Heart right ventricle (tissue), 16 donors: ENCODE measurements at regions of chr10 and their contacts with region 1.

Region 1: DNA sequence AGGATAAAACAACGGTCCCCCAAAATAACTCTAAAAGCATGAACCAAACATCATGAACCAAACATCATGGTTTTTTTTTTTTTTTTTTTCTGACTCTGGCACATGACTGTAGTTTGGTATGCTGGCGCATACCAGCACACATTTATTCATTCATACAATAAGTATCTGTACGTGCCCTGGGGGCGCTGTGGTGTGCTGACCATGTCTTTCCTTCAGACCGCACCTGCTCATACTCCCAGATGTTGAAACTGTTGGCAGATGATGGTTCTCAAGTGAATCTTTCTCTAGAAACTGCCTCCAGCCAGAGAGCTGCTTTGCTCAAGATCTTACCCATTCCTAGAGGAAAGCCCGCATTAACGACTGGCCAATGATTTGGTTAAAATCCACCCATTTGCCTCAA is 114.7 kb upstream of the ANKRD30A start:
- DNase-seq: no peak
- ATAC-seq: no peak
- H3K4me3 ChIP-seq: no peak overlapping the region
- H3K27ac ChIP-seq: no peak overlapping the region
- H3K4me1 ChIP-seq: no peaks in the 10 kb centered on the region
- H3K27me3 ChIP-seq: peaks cover 0 to 5% (median 0%) of the 10 kb centered on the region in 7 donors
- CTCF ChIP-seq: no peak

Region 2: DNA sequence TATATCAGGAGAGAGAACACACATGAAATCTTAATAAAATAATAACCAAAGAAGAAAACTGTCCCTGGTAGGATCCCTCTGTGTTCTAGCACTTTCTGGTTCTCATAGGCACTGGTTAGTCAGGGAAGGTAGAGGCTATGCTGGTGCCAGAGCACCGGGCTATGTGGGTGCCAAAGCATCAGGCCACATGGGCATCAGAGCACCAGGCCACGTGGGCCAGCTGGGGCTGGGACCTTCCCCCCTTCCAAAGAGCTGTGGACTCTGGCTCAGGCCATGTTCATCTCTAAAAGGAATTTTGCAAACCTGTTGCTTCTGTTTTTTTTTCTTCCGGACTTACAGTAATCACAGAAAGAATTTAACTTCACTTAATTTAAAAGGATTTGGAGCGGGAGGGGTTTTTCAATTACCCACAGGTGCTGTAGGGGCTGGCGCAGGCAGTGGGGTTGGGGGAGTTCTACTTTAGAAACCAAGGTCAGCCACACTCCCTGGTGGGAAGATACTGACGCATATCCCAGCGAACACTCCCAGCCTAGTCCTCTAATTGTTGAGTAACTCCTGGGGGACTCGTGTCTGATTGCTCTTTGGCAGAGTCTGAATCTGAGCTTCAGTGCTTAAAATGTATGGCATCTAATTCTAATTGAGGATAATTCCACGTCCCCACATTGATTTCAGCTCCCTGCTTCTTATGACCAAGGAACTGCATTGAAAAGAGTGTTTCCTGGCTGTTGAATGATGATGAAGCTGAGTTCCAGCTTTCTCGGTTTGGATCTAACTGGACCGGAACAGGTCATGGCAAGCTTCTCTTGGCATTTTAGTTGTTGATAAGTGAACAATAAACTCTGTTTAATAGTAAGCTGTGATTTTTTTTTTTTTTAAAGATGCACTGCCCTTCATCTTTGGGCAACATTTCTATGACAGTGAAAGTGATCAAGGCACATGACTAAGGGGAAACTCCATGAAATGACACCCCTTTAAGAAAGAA is 1258.0 kb before region 1 on chr10:
- intact Hi-C with region 1: loop called in 1 of 10 experiments (anchors 10 kb)
- DNase-seq: peak; percentile 14 to 31
- ATAC-seq: peak in 7 of 8 donors; percentile 55 to 91 (median 64)
- H3K4me3 ChIP-seq: no peak overlapping the region
- H3K27ac ChIP-seq: no peak overlapping the region
- H3K4me1 ChIP-seq: peaks cover 0 to 9% (median 0%) of the 10 kb centered on the region in 9 donors
- H3K27me3 ChIP-seq: no peaks in the 10 kb centered on the region
- CTCF ChIP-seq: no peak

Region 3: DNA sequence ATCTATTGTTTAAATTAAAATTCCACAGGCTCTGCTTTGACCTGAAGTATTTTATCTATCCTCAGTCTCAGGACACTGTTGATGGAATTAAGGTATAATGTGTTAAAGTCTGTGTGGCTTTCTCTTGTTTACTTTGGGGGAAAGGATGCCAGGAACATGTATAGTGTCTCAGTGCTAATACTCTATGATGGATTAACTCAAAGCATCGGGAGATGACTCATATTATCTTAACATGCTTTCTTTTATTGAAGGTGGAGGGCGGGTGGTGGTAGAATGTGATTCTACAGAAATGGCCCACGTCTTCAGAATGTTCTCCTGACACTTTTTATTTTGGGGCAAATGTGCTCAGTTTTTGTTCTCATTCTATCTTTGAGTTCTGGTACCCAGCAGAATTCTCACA is 303.6 kb after region 1 on chr10:
- intact Hi-C with region 1: loop called in 1 of 10 experiments (anchors 5 kb)
- DNase-seq: no peak
- ATAC-seq: no peak
- H3K4me3 ChIP-seq: no peak overlapping the region
- H3K27ac ChIP-seq: no peak overlapping the region
- H3K4me1 ChIP-seq: no peaks in the 10 kb centered on the region
- H3K27me3 ChIP-seq: no peaks in the 10 kb centered on the region
- CTCF ChIP-seq: no peak